Sigmoid colon (tissue), 7 donors: ENCODE measurements at regions of chr12 and their contacts with region 1.

Region 1: GRCh38 chr12:131673888-131674257 is 37.0 kb upstream of the SFSWAP start:
- DNase-seq: no peak
- H3K4me3 ChIP-seq: no peak overlapping the region
- H3K27ac ChIP-seq: no peak overlapping the region
- H3K4me1 ChIP-seq: no peaks in the 10 kb centered on the region
- H3K27me3 ChIP-seq: peaks cover 0 to 8% (median 0%) of the 10 kb centered on the region in 3 donors
- CTCF ChIP-seq: no peak
- EP300 ChIP-seq: no peak
- POLR2A ChIP-seq: no peak

Region 2: DNA sequence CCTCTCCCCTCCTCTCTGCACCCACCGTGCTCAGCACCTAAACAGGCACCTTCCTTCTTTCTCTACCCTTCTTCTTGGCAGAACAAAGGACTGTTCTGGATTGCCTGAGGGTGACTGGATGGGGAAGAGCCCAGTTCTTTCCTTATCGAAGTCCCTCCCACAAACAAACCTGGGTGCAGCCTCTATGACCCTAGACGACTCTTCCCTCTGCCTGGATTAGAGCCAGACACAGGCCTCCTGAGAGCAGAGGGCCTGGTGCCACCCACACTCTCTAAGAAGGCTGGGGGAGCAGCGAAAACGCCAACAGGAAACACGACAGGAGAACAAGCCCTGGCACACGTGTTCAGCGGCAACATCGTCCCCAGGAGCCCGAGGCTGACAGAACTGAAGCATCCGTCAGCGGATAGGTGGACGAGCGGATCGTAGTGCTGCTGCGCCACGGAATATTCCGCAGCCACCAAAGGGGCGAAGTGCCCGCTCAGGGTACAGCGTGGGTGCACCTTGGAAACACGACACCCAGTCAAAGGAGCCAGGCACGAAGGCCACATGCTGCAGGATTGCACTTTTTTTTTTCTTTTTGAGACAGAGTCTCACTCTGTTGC is 995.8 kb before region 1 on chr12:
- intact Hi-C with region 1: no loop called
- DNase-seq: no peak
- H3K4me3 ChIP-seq: no peak overlapping the region
- H3K27ac ChIP-seq: no peak overlapping the region
- H3K4me1 ChIP-seq: no peaks in the 10 kb centered on the region
- H3K27me3 ChIP-seq: no peaks in the 10 kb centered on the region
- CTCF ChIP-seq: no peak
- EP300 ChIP-seq: no peak
- POLR2A ChIP-seq: no peak

Region 3: DNA sequence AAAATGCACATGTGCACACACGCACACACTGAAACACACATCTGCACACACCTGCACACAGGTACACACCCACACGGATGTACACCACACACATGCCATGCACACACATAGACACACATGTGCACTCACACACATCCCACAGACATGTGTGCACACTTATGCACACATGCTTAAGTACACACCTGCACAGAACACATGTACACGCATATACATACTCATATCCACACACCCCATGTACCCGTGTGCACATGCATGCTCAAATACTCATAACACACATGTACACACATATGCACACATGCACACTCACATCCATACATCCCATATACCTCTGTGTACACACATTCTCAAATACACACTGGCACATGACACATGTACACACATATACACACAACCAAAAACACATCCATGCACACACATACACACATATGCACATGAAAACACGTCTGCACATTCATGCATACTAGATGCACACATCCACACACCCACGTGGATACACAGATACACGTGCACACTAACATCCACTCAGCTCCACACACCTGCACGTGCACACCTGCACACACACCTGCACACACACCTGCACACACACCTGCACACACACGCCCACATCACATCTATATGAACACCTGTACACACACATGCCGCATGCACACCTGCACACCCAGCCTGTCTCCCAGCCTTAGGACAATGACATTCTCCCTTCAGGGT is 383.5 kb before region 1 on chr12:
- intact Hi-C with region 1: loop called (anchors 10 kb)
- DNase-seq: no peak
- H3K4me3 ChIP-seq: no peak overlapping the region
- H3K27ac ChIP-seq: no peak overlapping the region
- H3K4me1 ChIP-seq: no peaks in the 10 kb centered on the region
- H3K27me3 ChIP-seq: peaks cover 0 to 9% (median 0%) of the 10 kb centered on the region in 3 donors
- CTCF ChIP-seq: no peak
- EP300 ChIP-seq: no peak
- POLR2A ChIP-seq: no peak

Region 4: GRCh38 chr12:131701705-131702572 is 28.1 kb after region 1 on chr12:
- intact Hi-C with region 1: no loop called
- DNase-seq: no peak
- H3K4me3 ChIP-seq: no peak overlapping the region
- H3K27ac ChIP-seq: no peak overlapping the region
- H3K4me1 ChIP-seq: no peaks in the 10 kb centered on the region
- H3K27me3 ChIP-seq: no peaks in the 10 kb centered on the region
- CTCF ChIP-seq: no peak
- EP300 ChIP-seq: no peak
- POLR2A ChIP-seq: no peak

Region 5: GRCh38 chr12:131755305-131756113 is 81.6 kb after region 1 on chr12:
- intact Hi-C with region 1: no loop called
- DNase-seq: no peak
- H3K4me3 ChIP-seq: no peak overlapping the region
- H3K27ac ChIP-seq: no peak overlapping the region
- H3K4me1 ChIP-seq: no peaks in the 10 kb centered on the region
- H3K27me3 ChIP-seq: no peaks in the 10 kb centered on the region
- CTCF ChIP-seq: peak in 1 of 4 experiments; percentile 8
- EP300 ChIP-seq: no peak
- POLR2A ChIP-seq: no peak